ENCODE measurements at regions of chr4 and their contacts with region 1.

Region 1: DNA sequence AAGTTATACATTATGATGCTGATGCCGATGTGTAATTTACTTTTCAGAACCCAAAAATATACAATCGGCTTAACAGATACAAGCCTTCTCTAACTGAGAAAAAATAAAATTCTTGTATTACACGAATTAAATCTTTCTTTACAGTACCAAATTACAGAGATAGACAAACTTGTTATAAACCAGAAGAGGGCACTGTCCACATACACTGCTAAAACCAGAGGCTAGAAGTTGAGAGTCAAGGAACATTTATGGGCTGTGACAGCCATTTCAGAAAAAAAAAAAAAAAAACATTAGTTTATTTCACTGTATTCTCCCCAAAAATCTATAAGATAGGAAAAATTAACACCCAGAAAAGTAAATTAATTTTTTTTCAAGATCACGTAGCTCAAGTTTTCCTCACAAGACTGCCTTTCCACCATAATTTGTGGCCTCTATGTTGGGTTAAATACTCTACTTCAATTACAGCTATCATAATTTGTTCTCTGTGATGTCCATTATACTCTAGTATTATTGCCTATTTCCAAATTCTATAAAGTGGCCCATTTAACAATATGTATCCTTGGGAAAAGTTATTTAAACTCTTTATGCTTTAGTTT is 12.0 kb downstream of the EREG start:
- DNase-seq: no peak
- ATAC-seq: peak in 5 of 8 donors; percentile 46 to 73 (median 71)
- H3K4me3 ChIP-seq: no peak overlapping the region
- H3K27ac ChIP-seq: no peak overlapping the region
- H3K4me1 ChIP-seq: no peaks in the 10 kb centered on the region
- H3K27me3 ChIP-seq: peaks cover 0 to under 1% (median 0%) of the 10 kb centered on the region in 7 donors
- CTCF ChIP-seq: peak in 8 of 9 donors; percentile 42 to 75 (median 64)

Region 2: DNA sequence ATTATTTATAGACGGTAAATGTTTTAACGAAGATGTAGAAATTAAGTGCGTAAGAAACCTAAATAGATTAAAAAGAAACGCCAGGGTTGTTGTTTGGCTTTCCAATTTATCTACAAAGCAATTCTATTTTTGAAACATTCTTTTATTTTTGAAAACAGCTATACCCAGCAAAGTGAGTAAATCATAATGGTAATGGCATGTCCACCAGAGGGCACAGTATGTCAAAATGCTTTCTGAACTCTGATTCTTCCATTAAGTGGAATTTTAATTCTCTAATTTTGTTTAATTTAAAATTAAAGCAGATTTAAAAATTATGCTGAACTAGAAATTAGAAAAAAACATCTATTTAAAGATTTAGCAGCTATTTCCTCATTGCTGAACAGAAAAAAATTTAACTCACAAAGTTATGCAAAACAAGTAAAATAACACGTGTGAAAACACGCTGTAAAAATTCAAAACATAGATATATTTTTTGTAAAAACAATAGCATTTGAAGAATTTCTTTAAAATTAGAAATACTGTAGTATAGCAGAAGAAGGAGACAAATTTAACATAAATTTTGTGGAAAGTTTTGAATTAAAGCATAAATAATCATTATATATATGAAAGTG is 783.2 kb before region 1 on chr4:
- intact Hi-C with region 1: no loop called
- DNase-seq: no peak
- ATAC-seq: no peak
- H3K4me3 ChIP-seq: no peak overlapping the region
- H3K27ac ChIP-seq: no peak overlapping the region
- H3K4me1 ChIP-seq: no peaks in the 10 kb centered on the region
- H3K27me3 ChIP-seq: no peaks in the 10 kb centered on the region
- CTCF ChIP-seq: peak in 7 of 9 donors; percentile 39 to 61 (median 52)

Region 3: DNA sequence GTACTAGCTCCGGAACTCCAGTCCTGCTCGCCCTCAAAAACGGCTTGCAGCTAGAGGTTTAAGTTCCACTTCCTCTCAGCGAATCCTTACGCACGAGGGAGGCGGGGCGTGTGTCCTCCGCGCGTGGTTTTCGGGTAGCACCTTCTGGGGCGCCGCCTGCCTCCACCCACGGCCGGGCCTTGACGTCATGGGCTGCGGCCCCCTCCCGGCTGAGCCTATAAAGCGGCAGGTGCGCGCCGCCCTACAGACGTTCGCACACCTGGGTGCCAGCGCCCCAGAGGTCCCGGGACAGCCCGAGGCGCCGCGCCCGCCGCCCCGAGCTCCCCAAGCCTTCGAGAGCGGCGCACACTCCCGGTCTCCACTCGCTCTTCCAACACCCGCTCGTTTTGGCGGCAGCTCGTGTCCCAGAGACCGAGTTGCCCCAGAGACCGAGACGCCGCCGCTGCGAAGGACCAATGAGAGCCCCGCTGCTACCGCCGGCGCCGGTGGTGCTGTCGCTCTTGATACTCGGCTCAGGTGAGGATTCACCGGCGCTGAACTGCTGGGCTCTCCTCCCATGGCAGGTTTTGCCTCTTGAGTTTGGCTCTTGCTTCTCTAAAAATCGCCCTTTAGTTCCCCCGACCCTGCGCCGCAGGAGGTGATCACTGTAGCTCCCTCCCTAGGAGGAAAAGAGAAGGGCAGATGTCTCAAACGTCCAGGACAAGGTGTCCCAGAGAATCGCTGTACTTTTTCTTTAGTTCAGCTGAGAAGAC is 68.1 kb after region 1 on chr4 and contains the start of gene AREG:
- intact Hi-C with region 1: loop called in 4 of 10 experiments (anchors 5 to 10 kb)
- DNase-seq: peak; percentile 59 to 62
- ATAC-seq: peak; percentile 70 to 93 (median 90)
- H3K4me3 ChIP-seq: peak within 1 kb of the TSS; percentile 16 to 75 (median 64)
- H3K27ac ChIP-seq: peak within 1 kb of the TSS in 8 of 10 donors; percentile 16 to 87 (median 48)
- H3K4me1 ChIP-seq: peaks cover 0 to 14% (median 8%) of the 10 kb centered on the region in 9 donors
- H3K27me3 ChIP-seq: no peaks in the 10 kb centered on the region
- CTCF ChIP-seq: peak in 8 of 9 donors; percentile 5 to 66 (median 59)
- total RNA-seq, gene AREG: 0.77 to 17.7 (median 4.3) TPM in 8 of 10 donors, not detected in the others

Region 4: DNA sequence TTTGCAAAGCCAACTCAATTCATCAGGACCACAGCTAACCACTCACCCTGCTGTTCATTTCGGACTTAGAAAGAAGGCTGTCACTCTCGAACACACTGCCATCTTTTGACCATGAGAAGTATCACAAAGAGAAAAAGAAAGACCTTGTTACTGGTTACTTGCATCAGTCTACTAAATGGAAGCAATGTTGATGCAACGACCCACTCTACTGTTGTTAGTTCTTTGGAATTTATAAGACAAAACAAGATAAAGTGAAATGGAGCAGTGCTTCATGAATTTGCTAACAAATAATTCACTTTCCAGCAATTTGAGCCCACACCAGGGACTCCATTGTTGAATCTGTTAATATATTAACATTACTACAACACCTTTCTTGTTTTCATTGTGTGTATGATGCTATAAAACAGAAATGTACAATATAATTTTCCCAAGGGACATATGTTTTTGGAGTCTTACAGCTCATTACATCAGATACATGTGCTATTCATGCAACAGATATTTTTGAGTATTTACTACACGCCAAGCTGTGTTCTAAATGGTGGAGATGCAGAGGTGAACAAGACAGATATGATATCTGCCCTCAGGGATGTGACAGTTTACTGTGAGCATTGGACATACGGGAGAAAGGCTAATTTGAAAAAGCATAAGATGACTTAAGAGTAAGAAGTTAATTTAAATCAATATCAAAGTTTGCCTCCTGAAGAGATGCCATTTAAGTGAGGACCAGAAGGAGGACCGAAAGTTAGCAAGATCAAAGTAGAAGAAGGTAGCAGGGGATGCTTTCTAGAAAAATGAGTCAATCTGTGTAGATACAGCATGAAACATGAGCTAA is 155.2 kb after region 1 on chr4:
- intact Hi-C with region 1: loop called (anchors 2 to 5 kb)
- DNase-seq: no peak
- ATAC-seq: peak in 5 of 8 donors; percentile 40 to 72 (median 68)
- H3K4me3 ChIP-seq: no peak overlapping the region
- H3K27ac ChIP-seq: no peak overlapping the region
- H3K4me1 ChIP-seq: peaks cover 0 to 21% (median 7%) of the 10 kb centered on the region in 9 donors
- H3K27me3 ChIP-seq: peaks cover 0 to 5% (median 0%) of the 10 kb centered on the region in 7 donors
- CTCF ChIP-seq: peak; percentile 9 to 72 (median 60)

Region 5: GRCh38 chr4:74623041-74623440 is 246.1 kb after region 1 on chr4:
- intact Hi-C with region 1: loop called in 7 of 10 experiments (anchors 5 to 10 kb)
- DNase-seq: no peak
- ATAC-seq: peak in 2 of 8 donors; percentile 65 to 69
- H3K4me3 ChIP-seq: no peak overlapping the region
- H3K27ac ChIP-seq: no peak overlapping the region
- H3K4me1 ChIP-seq: peaks cover 0 to 30% (median 5%) of the 10 kb centered on the region in 9 donors
- H3K27me3 ChIP-seq: no peaks in the 10 kb centered on the region
- CTCF ChIP-seq: peak; percentile 10 to 58 (median 43)

Region 6: GRCh38 chr4:74665377-74665776 is 288.4 kb after region 1 on chr4:
- intact Hi-C with region 1: loop called in 7 of 10 experiments (anchors 5 to 10 kb)
- DNase-seq: no peak
- ATAC-seq: no peak
- H3K4me3 ChIP-seq: no peak overlapping the region
- H3K27ac ChIP-seq: no peak overlapping the region
- H3K4me1 ChIP-seq: peaks cover 0 to 1% (median 0%) of the 10 kb centered on the region in 9 donors
- H3K27me3 ChIP-seq: peaks cover 0 to 3% (median 0%) of the 10 kb centered on the region in 7 donors
- CTCF ChIP-seq: no peak